H1 (cell line): ENCODE measurements at regions of chr1 and their contacts with region 1.

Region 1: GRCh38 chr1:229479660-229480399 is 28.3 kb downstream of the NUP133 start:
- DNase-seq: no peak
- H3K4me3 ChIP-seq: no peak overlapping the region
- H3K27ac ChIP-seq: no peak overlapping the region
- H3K4me1 ChIP-seq: no peaks in the 10 kb centered on the region
- H3K27me3 ChIP-seq: no peaks in the 10 kb centered on the region
- CTCF ChIP-seq: no peak
- EP300 ChIP-seq: no peak
- POLR2A ChIP-seq: no peak
- RAD21 ChIP-seq: no peak

Region 2: DNA sequence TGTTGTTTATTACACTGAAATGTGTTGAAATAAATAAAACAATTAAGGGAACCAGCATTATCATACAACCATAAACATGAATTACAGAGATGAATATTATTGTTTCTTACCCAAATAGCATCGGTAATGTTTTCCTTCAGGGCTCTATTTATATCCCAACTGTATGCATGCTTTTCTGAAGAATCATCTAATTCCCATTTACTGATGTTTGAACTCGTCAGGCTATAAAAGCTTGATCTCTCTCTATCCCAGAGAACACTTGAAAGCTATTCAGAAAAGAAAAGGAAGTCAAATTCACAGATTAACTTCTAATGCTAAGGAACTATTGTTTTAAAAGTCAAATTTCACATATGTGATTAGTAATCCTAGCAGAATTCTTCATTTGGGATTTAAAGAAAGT is 16.0 kb after region 1 on chr1:
- CTCF ChIA-PET with region 1: interaction called, 13 read pairs
- POLR2A ChIA-PET with region 1: interaction called, 3 read pairs
- DNase-seq: no peak
- H3K4me3 ChIP-seq: no peak overlapping the region
- H3K27ac ChIP-seq: no peak overlapping the region
- H3K4me1 ChIP-seq: no peaks in the 10 kb centered on the region
- H3K27me3 ChIP-seq: no peaks in the 10 kb centered on the region
- CTCF ChIP-seq: no peak
- EP300 ChIP-seq: no peak
- POLR2A ChIP-seq: no peak
- RAD21 ChIP-seq: no peak

Region 3: DNA sequence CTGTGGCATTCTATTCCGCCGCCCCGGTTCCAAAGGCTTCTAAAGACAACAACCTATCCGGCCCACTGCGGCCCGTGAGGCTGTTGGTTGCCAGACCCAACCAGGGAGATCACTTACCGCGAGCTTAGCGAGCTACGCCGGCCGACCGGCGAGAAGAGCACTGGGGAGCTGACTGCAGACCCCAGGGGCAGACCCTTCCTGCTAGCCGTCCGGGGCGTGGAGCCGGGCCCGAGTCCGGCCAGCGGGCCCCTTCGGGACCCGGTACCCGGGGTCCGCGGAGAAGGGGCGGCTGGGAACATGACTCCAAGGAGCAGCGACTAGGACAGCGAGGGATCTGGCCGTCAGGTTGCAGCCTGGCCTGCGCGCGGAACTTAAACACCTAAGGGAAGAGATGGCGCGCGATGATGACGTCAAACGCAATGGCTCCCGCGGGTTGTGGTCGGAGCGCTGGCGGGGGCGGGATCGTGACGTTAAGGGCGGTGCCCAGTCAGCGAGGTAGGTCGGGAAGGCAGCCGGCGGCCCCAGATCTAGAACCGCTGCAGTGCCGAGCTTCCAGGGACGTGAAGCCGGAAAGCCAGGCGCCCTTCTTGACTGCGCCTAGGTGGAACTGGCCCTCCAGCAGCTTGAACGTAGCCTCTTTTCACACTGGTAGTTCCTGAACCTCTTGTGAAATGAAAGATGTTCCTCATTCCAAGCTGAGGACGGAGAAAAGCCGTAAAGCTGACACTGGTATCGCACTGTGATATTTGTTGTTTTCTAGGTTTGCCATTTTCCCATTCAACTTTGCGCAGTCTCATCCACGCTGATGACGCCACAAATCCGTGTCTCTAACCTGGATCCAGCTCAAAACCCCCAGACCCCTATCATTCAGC is 28.4 kb after region 1 on chr1 and contains the start of gene NUP133:
- CTCF ChIA-PET with region 1: interaction called, 10 read pairs
- POLR2A ChIA-PET with region 1: interaction called, 6 read pairs
- DNase-seq: peak; percentile 93 to 99
- H3K4me3 ChIP-seq: peak within 1 kb of the TSS; percentile 90 to 100 (median 95)
- H3K27ac ChIP-seq: peak within 1 kb of the TSS; percentile 94
- H3K4me1 ChIP-seq: peaks cover 0 to 5% (median 3%) of the 10 kb centered on the region in 4 experiments; a peak in 6 of 7 replicates
- H3K27me3 ChIP-seq: no peaks in the 10 kb centered on the region
- CTCF ChIP-seq: no peak
- EP300 ChIP-seq: no peak
- POLR2A ChIP-seq: peak; percentile 95 to 99
- RAD21 ChIP-seq: no peak
- total RNA-seq, gene NUP133: 67.6 and 72.1 TPM in 2 replicates

Region 4: GRCh38 chr1:229563701-229564100 is 83.9 kb after region 1 on chr1:
- CTCF ChIA-PET with region 1: no interaction called
- POLR2A ChIA-PET with region 1: no interaction called
- DNase-seq: no peak
- H3K4me3 ChIP-seq: no peak overlapping the region
- H3K27ac ChIP-seq: no peak overlapping the region
- H3K4me1 ChIP-seq: peaks cover 0 to 6% (median 1%) of the 10 kb centered on the region in 4 experiments; a peak in 3 of 7 replicates
- H3K27me3 ChIP-seq: no peaks in the 10 kb centered on the region
- CTCF ChIP-seq: no peak
- EP300 ChIP-seq: no peak
- POLR2A ChIP-seq: no peak
- RAD21 ChIP-seq: no peak

Region 5: DNA sequence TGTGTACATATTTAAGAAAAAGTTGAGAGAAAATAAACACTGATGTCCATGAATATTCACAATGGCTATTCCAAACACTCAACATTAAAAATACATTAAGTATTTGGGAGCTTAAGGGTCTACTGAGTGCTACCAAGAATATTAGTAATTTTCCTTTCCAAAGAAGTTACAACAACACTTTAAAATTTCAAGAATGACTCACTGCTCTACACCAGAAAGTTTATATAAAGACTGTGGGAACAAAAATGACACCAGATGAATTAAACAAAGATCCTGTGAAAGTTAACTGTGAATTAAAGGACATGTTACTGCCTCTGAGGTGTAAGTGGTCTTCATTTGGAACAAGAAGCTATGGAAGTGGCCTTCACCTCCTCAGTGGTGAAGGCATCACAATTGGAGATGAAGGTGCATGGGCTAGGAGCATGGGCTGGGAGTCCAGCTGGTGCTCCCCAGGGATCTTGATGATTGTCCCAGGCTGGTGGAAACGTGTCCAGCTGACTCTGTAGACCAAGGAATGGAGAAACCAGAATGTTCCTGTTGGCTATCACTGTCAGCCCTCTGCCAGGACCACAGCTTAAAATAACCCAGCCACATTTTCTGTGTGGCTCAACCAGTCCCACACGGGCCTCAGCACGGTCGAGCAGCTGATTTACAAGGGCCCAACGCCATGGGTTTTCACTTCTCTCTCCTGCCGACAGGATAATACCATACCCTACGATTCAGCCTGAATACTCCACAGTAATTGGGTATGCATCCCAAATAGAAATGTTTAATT is 117.3 kb after region 1 on chr1:
- CTCF ChIA-PET with region 1: no interaction called
- POLR2A ChIA-PET with region 1: no interaction called
- DNase-seq: no peak
- H3K4me3 ChIP-seq: no peak overlapping the region
- H3K27ac ChIP-seq: no peak overlapping the region
- H3K4me1 ChIP-seq: peaks cover 0 to 3% (median 2%) of the 10 kb centered on the region in 4 experiments; a peak in 1 of 7 replicates
- H3K27me3 ChIP-seq: no peaks in the 10 kb centered on the region
- CTCF ChIP-seq: no peak
- EP300 ChIP-seq: no peak
- POLR2A ChIP-seq: no peak
- RAD21 ChIP-seq: no peak